Activated naive CD4-positive, alpha-beta T cell treated with anti-CD3 and anti-CD28 coated beads for 36 hours (primary cell): ENCODE measurements at regions of chr20 and their contacts with region 1.

Region 1: GRCh38 chr20:56392282-56393137 is at the start of gene CSTF1:
- DNase-seq: peak; percentile 100
- H3K4me3 Mint-ChIP-seq: no peak within 1 kb of the TSS
- H3K27ac Mint-ChIP-seq: no peak within 1 kb of the TSS
- H3K4me1 Mint-ChIP-seq: peaks cover 33% of the 10 kb centered on the region
- H3K27me3 Mint-ChIP-seq: no peaks in the 10 kb centered on the region
- total RNA-seq, gene CSTF1: 68.0 to 70.7 TPM

Region 2: DNA sequence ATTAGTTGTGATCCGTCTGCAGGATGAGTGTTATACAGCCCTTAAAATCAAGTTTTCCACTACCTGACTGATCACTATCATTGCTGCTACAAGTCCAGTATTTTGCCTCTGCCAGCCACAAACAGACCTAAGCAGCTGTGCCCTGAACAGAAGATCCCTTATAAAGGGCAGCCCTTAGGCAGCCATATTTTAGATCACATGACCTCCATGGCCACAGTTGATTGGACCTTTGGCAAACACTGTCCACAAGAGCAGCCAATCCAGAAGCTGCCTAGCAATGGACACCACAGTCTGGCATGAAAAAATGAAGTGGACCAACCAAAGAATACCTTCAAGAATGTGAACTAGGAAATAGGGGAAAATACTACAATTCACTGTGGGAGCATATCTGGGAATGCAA is 93.2 kb before region 1 on chr20:
- CTCF ChIA-PET with region 1: no interaction called
- intact Hi-C with region 1: no loop called
- DNase-seq: no peak
- H3K4me3 Mint-ChIP-seq: no peak overlapping the region
- H3K27ac Mint-ChIP-seq: no peak overlapping the region
- H3K4me1 Mint-ChIP-seq: no peaks in the 10 kb centered on the region
- H3K27me3 Mint-ChIP-seq: peaks cover 17% of the 10 kb centered on the region

Region 3: GRCh38 chr20:56358596-56359211 is 33.8 kb before region 1 on chr20 and contains the start of gene FAM210B:
- CTCF ChIA-PET with region 1: no interaction called
- intact Hi-C with region 1: loop called (anchors 1 kb)
- DNase-seq: peak; percentile 82
- H3K4me3 Mint-ChIP-seq: peak within 1 kb of the TSS; percentile 86
- H3K27ac Mint-ChIP-seq: peak within 1 kb of the TSS; percentile 53
- H3K4me1 Mint-ChIP-seq: peaks cover 16% of the 10 kb centered on the region
- H3K27me3 Mint-ChIP-seq: no peaks in the 10 kb centered on the region
- total RNA-seq, gene FAM210B: 7.5 to 8.2 TPM

Region 4: DNA sequence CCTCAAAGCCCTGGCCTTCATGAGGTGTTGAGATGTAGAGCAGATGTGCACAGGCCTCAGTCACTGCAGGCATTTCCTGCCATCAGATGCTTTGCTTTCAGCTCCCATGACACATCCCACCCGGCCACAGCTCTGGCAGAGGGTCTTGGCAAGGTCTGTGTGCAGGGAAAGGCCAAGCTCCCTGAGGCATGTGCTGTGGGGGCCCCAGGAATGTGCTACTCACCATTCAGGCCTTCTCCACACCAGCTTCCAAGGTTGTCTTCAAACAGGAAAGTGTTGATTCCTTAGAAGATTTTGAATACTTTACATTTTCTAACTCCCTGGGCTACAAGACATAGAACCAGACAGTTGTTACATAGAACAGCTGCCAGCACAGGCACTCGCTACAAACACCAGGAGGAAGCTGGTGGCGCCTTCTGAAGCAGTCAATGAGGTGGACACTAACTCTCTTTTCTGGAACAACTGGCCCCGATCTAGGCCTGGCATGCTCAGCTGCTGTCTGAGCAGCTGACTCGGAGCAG is 47.3 kb after region 1 on chr20:
- CTCF ChIA-PET with region 1: interaction called, 3 read pairs
- intact Hi-C with region 1: loop called (anchors 1 kb)
- DNase-seq: peak; percentile 38
- H3K4me3 Mint-ChIP-seq: no peak overlapping the region
- H3K27ac Mint-ChIP-seq: peak overlapping the region; percentile 77
- H3K4me1 Mint-ChIP-seq: peaks cover 40% of the 10 kb centered on the region
- H3K27me3 Mint-ChIP-seq: no peaks in the 10 kb centered on the region

Region 5: GRCh38 chr20:56468316-56469082 is 76.0 kb after region 1 on chr20 and contains the start of gene RTF2:
- CTCF ChIA-PET with region 1: interaction called, 4 read pairs
- intact Hi-C with region 1: loop called (anchors 1 kb)
- DNase-seq: peak; percentile 95
- H3K4me3 Mint-ChIP-seq: peak within 1 kb of the TSS; percentile 100
- H3K27ac Mint-ChIP-seq: peak within 1 kb of the TSS; percentile 98
- H3K4me1 Mint-ChIP-seq: peaks cover 29% of the 10 kb centered on the region
- H3K27me3 Mint-ChIP-seq: no peaks in the 10 kb centered on the region
- total RNA-seq, gene RTF2: 76.8 to 82.9 TPM

Region 6: DNA sequence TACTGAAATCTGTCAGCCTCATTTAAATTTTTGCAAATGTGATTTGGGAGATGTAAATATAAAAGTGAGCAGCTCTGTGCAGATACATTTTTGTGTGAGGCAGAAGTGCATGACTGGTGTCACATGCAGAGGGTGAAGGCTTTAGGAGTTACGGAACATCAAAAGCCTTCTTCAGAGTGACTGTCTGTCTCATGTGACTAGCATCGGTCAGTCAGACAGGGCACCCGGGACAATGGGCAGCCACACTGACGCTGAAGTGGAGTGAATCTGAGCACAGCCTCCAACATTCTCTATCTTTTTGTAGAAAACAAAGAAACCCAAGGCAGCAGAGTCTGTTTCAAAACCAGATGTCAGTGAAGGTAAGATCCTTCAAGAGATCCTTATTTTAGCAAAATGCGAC is 124.1 kb after region 1 on chr20:
- CTCF ChIA-PET with region 1: no interaction called
- intact Hi-C with region 1: loop called (anchors 1 kb)
- DNase-seq: no peak
- H3K4me3 Mint-ChIP-seq: no peak overlapping the region
- H3K27ac Mint-ChIP-seq: no peak overlapping the region
- H3K4me1 Mint-ChIP-seq: no peaks in the 10 kb centered on the region
- H3K27me3 Mint-ChIP-seq: no peaks in the 10 kb centered on the region